ENCODE measurements at regions of chr3 and their contacts with region 1.

Region 1: GRCh38 chr3:183188895-183189462 is 26.4 kb upstream of the LAMP3 start:
- DNase-seq: peak; percentile 14 to 29
- ATAC-seq: peak; percentile 59 to 85; a peak in 4 of 6 replicates
- H3K4me3 ChIP-seq: no peak overlapping the region
- H3K27ac ChIP-seq: no peak overlapping the region
- H3K4me1 ChIP-seq: no peaks in the 10 kb centered on the region
- CTCF ChIP-seq: peak; percentile 11; the same call in 1 of the 3 replicates
- EP300 ChIP-seq: no peak
- POLR2A ChIP-seq: no peak
- RAD21 ChIP-seq: peak in 1 of 2 experiments; percentile 8; a peak in 1 of 5 replicates

Region 2: DNA sequence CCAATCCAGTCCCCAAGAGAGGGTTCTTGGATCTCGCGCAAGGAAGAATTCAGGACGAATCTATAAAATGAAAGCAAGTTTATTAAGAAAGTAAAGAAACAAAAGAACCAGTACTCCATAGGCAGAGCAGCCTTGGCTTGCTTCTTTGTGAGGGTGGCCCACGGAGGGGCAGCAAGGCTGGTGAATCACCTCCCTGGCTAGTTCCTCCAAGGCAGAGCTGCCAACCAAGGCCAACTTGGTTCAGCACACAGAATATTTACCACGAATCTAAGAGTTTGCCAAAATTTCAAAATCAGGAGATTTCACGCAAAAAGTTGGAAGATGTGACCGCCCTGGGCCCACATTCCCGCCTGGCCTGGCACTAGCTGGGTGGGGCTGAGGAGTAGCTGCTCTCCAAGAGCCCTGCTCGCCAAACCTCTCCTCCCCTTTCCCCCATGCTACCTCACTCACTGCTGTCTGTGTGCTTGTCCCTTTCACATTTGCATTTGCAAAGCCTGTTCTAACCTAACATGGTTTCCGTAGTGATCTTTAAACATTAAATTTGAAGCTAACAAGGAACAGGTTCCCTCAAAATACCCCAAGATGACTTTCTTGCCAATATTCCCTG is 182.5 kb before region 1 on chr3:
- CTCF ChIA-PET with region 1: no interaction called
- POLR2A ChIA-PET with region 1: no interaction called
- DNase-seq: no peak
- ATAC-seq: no peak
- H3K4me3 ChIP-seq: no peak overlapping the region
- H3K27ac ChIP-seq: no peak overlapping the region
- H3K4me1 ChIP-seq: no peaks in the 10 kb centered on the region
- CTCF ChIP-seq: no peak
- EP300 ChIP-seq: no peak
- POLR2A ChIP-seq: no peak
- RAD21 ChIP-seq: no peak

Region 3: DNA sequence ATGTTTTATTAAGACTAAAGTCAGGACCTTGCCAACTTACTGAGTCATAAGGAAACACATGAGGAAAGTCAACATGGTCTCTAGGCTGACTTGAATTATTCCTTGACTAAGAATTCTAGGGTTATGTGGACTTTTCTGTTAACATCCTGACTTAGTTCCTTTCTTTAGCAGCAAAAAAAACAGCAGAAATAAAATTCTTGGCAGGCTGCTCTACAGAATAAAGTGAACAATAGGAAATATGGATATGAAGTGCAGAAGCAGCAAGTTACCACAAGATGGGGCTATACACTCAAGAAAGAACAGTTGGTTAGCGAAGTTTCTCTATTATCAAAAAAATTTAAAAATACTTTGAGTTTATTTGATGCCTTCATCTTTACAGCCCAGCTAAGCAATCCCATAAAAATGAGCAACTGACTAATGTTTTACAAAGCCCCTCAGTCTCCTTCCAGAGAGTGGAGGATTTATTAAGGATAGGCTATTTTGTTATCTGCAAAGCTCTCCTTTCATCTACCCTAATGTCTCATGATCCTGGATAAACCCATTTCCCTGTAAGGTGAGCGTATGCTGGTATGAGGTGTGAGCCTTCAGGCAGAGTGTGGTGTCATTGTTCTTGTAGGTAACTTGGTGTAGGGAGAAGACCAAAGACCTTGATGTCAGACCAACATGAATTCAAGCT is 66.6 kb before region 1 on chr3:
- CTCF ChIA-PET with region 1: interaction called, 47 read pairs
- POLR2A ChIA-PET with region 1: no interaction called
- DNase-seq: peak; percentile 26 to 34
- ATAC-seq: peak; percentile 60 to 62; a peak in 3 of 6 replicates
- H3K4me3 ChIP-seq: no peak overlapping the region
- H3K27ac ChIP-seq: no peak overlapping the region
- H3K4me1 ChIP-seq: peaks cover 4% of the 10 kb centered on the region; the same call in 1 of the 3 replicates
- CTCF ChIP-seq: peak; percentile 84
- EP300 ChIP-seq: no peak
- POLR2A ChIP-seq: no peak
- RAD21 ChIP-seq: peak; percentile 78 to 87

Region 4: DNA sequence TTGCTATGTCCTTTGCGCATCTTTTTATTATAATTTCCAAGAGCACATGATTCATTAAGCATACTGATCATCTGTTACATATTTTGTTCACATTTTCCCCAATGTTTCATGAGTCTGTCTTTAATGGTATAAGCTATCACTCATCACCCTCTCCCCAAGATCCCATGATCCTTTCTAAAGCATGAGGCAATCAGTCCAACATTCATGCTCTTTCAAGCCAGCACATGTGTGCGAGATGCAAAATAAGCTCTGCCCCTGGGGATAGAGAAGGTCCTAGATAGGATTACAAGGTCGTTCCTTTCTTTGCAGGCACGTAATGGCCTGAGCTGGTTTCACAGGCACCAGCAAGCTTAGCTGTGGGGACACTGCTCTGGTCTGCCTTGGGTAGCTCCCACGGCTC is 31.8 kb after region 1 on chr3:
- CTCF ChIA-PET with region 1: interaction called, 11 read pairs
- POLR2A ChIA-PET with region 1: no interaction called
- DNase-seq: no peak
- ATAC-seq: no peak
- H3K4me3 ChIP-seq: no peak overlapping the region
- H3K27ac ChIP-seq: no peak overlapping the region
- H3K4me1 ChIP-seq: no peaks in the 10 kb centered on the region
- CTCF ChIP-seq: no peak
- EP300 ChIP-seq: no peak
- POLR2A ChIP-seq: no peak
- RAD21 ChIP-seq: no peak

Region 5: GRCh38 chr3:183252973-183253901 is 64.3 kb after region 1 on chr3 and contains the start of gene B3GNT5:
- CTCF ChIA-PET with region 1: interaction called, 34 read pairs
- POLR2A ChIA-PET with region 1: interaction called, 3 read pairs
- DNase-seq: peak in 1 of 2 experiments; percentile 46
- ATAC-seq: peak; percentile 64 to 69
- H3K4me3 ChIP-seq: peak within 1 kb of the TSS; percentile 70
- H3K27ac ChIP-seq: peak within 1 kb of the TSS; percentile 79 to 90
- H3K4me1 ChIP-seq: peaks cover 6% of the 10 kb centered on the region; the same call in 1 of the 3 replicates
- CTCF ChIP-seq: no peak
- EP300 ChIP-seq: no peak
- POLR2A ChIP-seq: no peak
- RAD21 ChIP-seq: no peak
- polyA plus RNA-seq, gene B3GNT5: 10.9 and 11.7 TPM in 2 replicates

Region 6: GRCh38 chr3:183392186-183393034 is 203.4 kb after region 1 on chr3:
- CTCF ChIA-PET with region 1: interaction called, 38 read pairs
- POLR2A ChIA-PET with region 1: no interaction called
- DNase-seq: no peak
- ATAC-seq: no peak
- H3K4me3 ChIP-seq: no peak overlapping the region
- H3K27ac ChIP-seq: no peak overlapping the region
- H3K4me1 ChIP-seq: no peaks in the 10 kb centered on the region
- CTCF ChIP-seq: no peak
- EP300 ChIP-seq: no peak
- POLR2A ChIP-seq: no peak
- RAD21 ChIP-seq: no peak

Region 7: DNA sequence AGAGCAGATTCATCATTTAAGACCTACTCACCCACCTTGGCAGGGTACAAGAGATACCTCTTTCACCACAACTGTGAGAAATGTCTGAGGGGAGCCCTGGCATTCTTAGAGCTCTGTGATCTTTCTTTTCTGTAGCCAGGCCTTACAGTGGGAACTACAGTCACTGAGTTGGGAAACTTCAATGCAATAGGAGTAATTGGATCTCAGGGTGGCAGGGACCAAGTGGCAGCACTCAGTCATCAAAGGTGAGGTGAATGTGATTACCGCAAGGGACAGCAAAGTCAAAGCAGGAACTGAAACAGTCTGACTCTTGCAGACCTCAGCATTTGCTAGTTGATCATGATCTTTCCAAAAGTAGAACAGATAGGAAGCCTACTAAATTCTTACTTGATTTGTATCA is 246.7 kb after region 1 on chr3:
- CTCF ChIA-PET with region 1: no interaction called
- POLR2A ChIA-PET with region 1: no interaction called
- DNase-seq: no peak
- ATAC-seq: no peak
- H3K4me3 ChIP-seq: no peak overlapping the region
- H3K27ac ChIP-seq: no peak overlapping the region
- H3K4me1 ChIP-seq: no peaks in the 10 kb centered on the region
- CTCF ChIP-seq: no peak
- EP300 ChIP-seq: no peak
- POLR2A ChIP-seq: no peak
- RAD21 ChIP-seq: no peak

Measured in A549 (cell line).